HCT116 (cell line): ENCODE measurements at regions of chr1 and their contacts with region 1.

Region 1: DNA sequence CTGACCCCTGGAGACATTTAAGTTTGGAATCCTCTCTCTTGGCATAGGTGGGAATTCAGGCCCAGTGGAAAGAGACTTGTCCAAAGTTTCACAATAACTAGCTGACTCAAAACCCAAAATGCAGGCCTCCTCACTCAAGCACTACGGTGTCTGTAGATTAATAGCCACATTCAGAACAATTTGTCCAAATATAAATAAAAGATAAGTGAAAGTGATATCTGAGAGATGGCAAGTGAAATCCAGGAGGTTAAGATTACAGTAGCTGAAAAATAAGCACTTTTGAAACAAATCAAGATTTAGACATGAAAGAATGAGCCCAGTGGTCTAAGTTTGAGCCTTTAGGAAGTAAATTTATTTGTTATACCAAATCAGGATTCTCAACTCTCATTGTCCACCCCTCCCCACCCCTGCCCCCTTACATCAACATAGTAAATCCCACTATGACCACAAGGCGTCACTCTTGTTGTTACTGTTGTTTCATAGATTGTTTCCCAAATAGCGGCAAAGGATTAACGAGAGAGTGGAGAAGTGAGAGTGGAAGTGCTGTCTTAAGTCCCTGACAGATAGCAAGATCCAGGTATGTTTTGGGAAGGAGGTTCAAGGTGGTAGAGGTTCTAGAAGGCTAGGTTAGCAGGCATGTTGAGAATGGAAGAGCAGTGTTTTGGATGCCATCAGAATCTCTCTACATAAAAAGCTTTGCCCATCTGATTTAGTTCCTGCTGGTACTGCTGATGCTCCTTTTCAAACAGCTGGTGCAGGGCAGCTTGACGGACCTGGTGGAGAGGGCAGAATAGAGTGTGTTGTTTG is 7.1 kb upstream of the TPM3 start:
- DNase-seq: no peak
- ATAC-seq: peak; percentile 86
- H3K4me3 ChIP-seq: 0 out of 4 replicates have a peak overlapping the region, but pooled peaks of 1 of the 2 experiments have one; percentile 2
- H3K27ac ChIP-seq: no peak overlapping the region
- H3K4me1 ChIP-seq: peaks cover 2 to 10% of the 10 kb centered on the region in 2 experiments; a peak in 2 of 4 replicates
- H3K27me3 ChIP-seq: peaks cover 10% of the 10 kb centered on the region; the same call in 1 of the 2 replicates
- CTCF ChIP-seq: peak; percentile 50 to 77 (median 71)
- POLR2A ChIP-seq: no peak
- RAD21 ChIP-seq: peak; percentile 79

Region 2: DNA sequence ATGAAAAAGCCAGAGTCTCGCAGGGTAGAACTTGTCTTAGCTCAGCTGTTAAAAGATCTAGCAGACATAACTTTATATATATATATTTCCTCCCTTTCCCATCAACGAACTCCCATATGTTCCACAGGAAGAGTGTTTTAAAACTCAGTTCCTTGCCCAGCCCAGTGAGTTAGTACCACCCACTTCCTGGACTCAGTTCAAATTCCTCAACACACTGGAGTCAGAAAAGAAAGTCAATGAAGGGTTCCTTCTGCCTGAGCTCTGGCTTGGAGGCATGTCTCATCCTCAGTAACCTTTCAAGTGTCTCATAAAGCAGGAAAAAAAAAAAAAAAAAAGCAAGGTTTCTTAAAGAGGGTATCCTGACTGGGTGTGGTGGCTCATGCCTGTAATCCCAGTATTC is 22.6 kb before region 1 on chr1:
- CTCF ChIA-PET with region 1: no interaction called
- POLR2A ChIA-PET with region 1: no interaction called
- RAD21 ChIA-PET with region 1: no interaction called
- intact Hi-C with region 1: no loop called
- DNase-seq: no peak
- ATAC-seq: no peak
- H3K4me3 ChIP-seq: no peak overlapping the region
- H3K27ac ChIP-seq: no peak overlapping the region
- H3K4me1 ChIP-seq: peaks cover 10 to 21% of the 10 kb centered on the region in 2 experiments
- H3K27me3 ChIP-seq: no peaks in the 10 kb centered on the region
- CTCF ChIP-seq: no peak
- POLR2A ChIP-seq: no peak
- RAD21 ChIP-seq: no peak

Region 3: GRCh38 chr1:154272217-154272998 is 73.4 kb after region 1 on chr1 and contains the start of gene HAX1:
- CTCF ChIA-PET with region 1: interaction called, 16 read pairs
- POLR2A ChIA-PET with region 1: no interaction called
- RAD21 ChIA-PET with region 1: interaction called in 1 of 2 experiments, 11 read pairs
- intact Hi-C with region 1: loop called (anchors 1 kb)
- DNase-seq: peak; percentile 96
- ATAC-seq: peak; percentile 94
- H3K4me3 ChIP-seq: peak within 1 kb of the TSS; percentile 78 to 97
- H3K27ac ChIP-seq: peak within 1 kb of the TSS; percentile 73
- H3K4me1 ChIP-seq: peaks cover 3 to 16% of the 10 kb centered on the region in 2 experiments; a peak in 3 of 4 replicates
- H3K27me3 ChIP-seq: no peaks in the 10 kb centered on the region
- CTCF ChIP-seq: peak; percentile 71 to 92 (median 91)
- POLR2A ChIP-seq: peak; percentile 48
- RAD21 ChIP-seq: peak; percentile 98
- total RNA-seq, gene HAX1: 93.6 TPM